Activated CD4-positive, alpha-beta T cell treated with anti-CD3 and anti-CD28 coated beads, Interleukin-2, amount 10 ng/mL, durations not matched to agents 7 days and 5 days (primary cell): ENCODE measurements at regions of chr2 and their contacts with region 1.

Region 1: GRCh38 chr2:44955593-44956392 is 14.3 kb downstream of the SIX3 start:
- DNase-seq: peak; percentile 79
- H3K4me3 Mint-ChIP-seq: no peak overlapping the region
- H3K27ac Mint-ChIP-seq: no peak overlapping the region
- H3K4me1 Mint-ChIP-seq: peaks cover 21% of the 10 kb centered on the region
- H3K27me3 Mint-ChIP-seq: peaks cover 66% of the 10 kb centered on the region

Region 2: GRCh38 chr2:44479122-44479887 is 476.5 kb before region 1 on chr2:
- CTCF ChIA-PET with region 1: interaction called, 19 read pairs
- POLR2A ChIA-PET with region 1: no interaction called
- DNase-seq: peak; percentile 68
- H3K4me3 Mint-ChIP-seq: no peak overlapping the region
- H3K27ac Mint-ChIP-seq: no peak overlapping the region
- H3K4me1 Mint-ChIP-seq: peaks cover 3% of the 10 kb centered on the region
- H3K27me3 Mint-ChIP-seq: no peaks in the 10 kb centered on the region